ENCODE measurements at regions of chr1 and their contacts with region 1.

Region 1: GRCh38 chr1:109790735-109791494 is 27.2 kb upstream of the EPS8L3 start:
- DNase-seq: peak; percentile 90
- H3K4me3 ChIP-seq: no peak overlapping the region
- H3K27ac ChIP-seq: peak overlapping the region; percentile 52
- H3K4me1 ChIP-seq: peaks cover 38% of the 10 kb centered on the region
- H3K27me3 ChIP-seq: no peaks in the 10 kb centered on the region
- CTCF ChIP-seq: peak; percentile 83 to 88
- POLR2A ChIP-seq: no peak

Region 2: GRCh38 chr1:109773146-109773899 is 17.6 kb before region 1 on chr1:
- CTCF ChIA-PET with region 1: interaction called, 76 read pairs
- POLR2A ChIA-PET with region 1: no interaction called
- dilution Hi-C with region 1: no loop called
- intact Hi-C with region 1: no loop called
- DNase-seq: peak; percentile 78
- H3K4me3 ChIP-seq: no peak overlapping the region
- H3K27ac ChIP-seq: no peak overlapping the region
- H3K4me1 ChIP-seq: no peaks in the 10 kb centered on the region
- H3K27me3 ChIP-seq: peaks cover 0 to 4% of the 10 kb centered on the region in 2 experiments
- CTCF ChIP-seq: peak; percentile 88 to 92
- POLR2A ChIP-seq: no peak

Region 3: DNA sequence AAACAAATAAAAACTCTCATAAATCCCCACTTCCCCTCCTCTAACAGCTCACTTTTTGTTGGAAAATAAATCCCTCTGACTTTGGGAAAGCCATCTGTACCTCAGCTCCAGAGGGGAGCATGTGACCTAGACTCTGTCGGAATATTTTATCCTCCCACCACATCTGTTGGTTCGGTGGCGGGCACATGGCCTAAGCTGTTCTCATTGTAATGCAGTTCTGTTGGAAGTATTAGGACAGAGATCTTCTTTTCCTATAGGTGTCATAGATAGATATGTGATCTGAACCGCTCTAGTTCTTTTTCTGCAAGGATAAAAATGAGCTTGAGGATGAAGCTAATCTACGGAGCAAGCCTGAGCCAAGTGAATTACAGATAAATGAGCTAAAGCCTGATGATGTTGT is 23.3 kb after region 1 on chr1:
- CTCF ChIA-PET with region 1: no interaction called
- POLR2A ChIA-PET with region 1: no interaction called
- dilution Hi-C with region 1: no loop called
- intact Hi-C with region 1: no loop called
- DNase-seq: no peak
- H3K4me3 ChIP-seq: no peak overlapping the region
- H3K27ac ChIP-seq: no peak overlapping the region
- H3K4me1 ChIP-seq: no peaks in the 10 kb centered on the region
- H3K27me3 ChIP-seq: peaks cover 4% of the 10 kb centered on the region in 2 experiments
- CTCF ChIP-seq: no peak
- POLR2A ChIP-seq: no peak

Region 4: GRCh38 chr1:109850194-109850593 is 59.3 kb after region 1 on chr1:
- CTCF ChIA-PET with region 1: interaction called, 12 read pairs
- POLR2A ChIA-PET with region 1: no interaction called
- dilution Hi-C with region 1: no loop called
- intact Hi-C with region 1: no loop called
- DNase-seq: no peak
- H3K4me3 ChIP-seq: no peak overlapping the region
- H3K27ac ChIP-seq: no peak overlapping the region
- H3K4me1 ChIP-seq: peaks cover 12% of the 10 kb centered on the region
- H3K27me3 ChIP-seq: peaks cover 2 to 4% of the 10 kb centered on the region in 2 experiments
- CTCF ChIP-seq: no peak
- POLR2A ChIP-seq: no peak

Region 5: GRCh38 chr1:109895720-109896504 is 105.0 kb after region 1 on chr1:
- CTCF ChIA-PET with region 1: interaction called, 24 read pairs
- POLR2A ChIA-PET with region 1: no interaction called
- dilution Hi-C with region 1: no loop called
- intact Hi-C with region 1: loop called (anchors 1 kb)
- DNase-seq: peak; percentile 85
- H3K4me3 ChIP-seq: no peak overlapping the region
- H3K27ac ChIP-seq: peak overlapping the region; percentile 71
- H3K4me1 ChIP-seq: peaks cover 43% of the 10 kb centered on the region
- H3K27me3 ChIP-seq: no peaks in the 10 kb centered on the region
- CTCF ChIP-seq: no peak
- POLR2A ChIP-seq: no peak

Region 6: GRCh38 chr1:109923131-109923945 is 132.4 kb after region 1 on chr1:
- CTCF ChIA-PET with region 1: interaction called, 37 read pairs
- POLR2A ChIA-PET with region 1: no interaction called
- dilution Hi-C with region 1: no loop called
- intact Hi-C with region 1: no loop called
- DNase-seq: no peak
- H3K4me3 ChIP-seq: no peak overlapping the region
- H3K27ac ChIP-seq: no peak overlapping the region
- H3K4me1 ChIP-seq: no peaks in the 10 kb centered on the region
- H3K27me3 ChIP-seq: no peaks in the 10 kb centered on the region
- CTCF ChIP-seq: peak; percentile 39 to 51
- POLR2A ChIP-seq: no peak

Region 7: GRCh38 chr1:110347182-110347893 is 556.4 kb after region 1 on chr1:
- CTCF ChIA-PET with region 1: no interaction called
- POLR2A ChIA-PET with region 1: no interaction called
- dilution Hi-C with region 1: no loop called
- intact Hi-C with region 1: no loop called
- DNase-seq: no peak
- H3K4me3 ChIP-seq: no peak overlapping the region
- H3K27ac ChIP-seq: no peak overlapping the region
- H3K4me1 ChIP-seq: peaks cover 13% of the 10 kb centered on the region
- H3K27me3 ChIP-seq: no peaks in the 10 kb centered on the region
- CTCF ChIP-seq: no peak
- POLR2A ChIP-seq: no peak

Measured in endothelial cell of umbilical vein (primary cell).